BJ (cell line): ENCODE measurements at regions of chr6 and their contacts with region 1.

Region 1: DNA sequence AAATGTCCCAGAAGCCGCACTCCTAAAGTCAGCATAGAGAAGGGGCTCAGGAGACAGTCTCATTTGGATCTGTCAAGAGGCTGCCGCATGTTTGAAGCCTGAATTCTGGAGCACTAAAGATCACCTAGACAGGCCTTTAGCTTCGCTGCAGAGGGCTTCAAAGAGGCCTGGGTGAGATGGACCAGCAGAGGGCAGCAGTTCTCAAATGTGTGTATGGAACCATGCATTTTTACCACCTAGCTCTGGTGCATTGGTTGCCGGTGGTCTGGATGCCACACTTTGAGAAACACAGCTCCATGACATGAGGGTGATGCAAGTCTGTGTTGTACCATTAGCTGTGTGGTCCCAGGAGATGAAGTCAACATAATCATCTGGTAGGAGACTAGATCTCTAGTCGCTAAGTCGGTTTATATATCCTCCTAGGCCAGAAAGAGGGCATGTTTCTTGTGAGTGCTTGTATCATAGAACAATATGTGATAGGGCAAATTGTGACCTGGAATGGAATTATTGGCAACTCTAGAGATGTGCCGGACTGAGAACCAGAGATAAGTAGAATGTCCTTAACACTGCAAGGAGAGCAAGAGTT is 64.8 kb downstream of the KIAA0319 start:
- DNase-seq: no peak
- H3K4me3 ChIP-seq: no peak overlapping the region
- H3K27me3 ChIP-seq: no peaks in the 10 kb centered on the region
- CTCF ChIP-seq: peak; percentile 90

Region 2: GRCh38 chr6:24551139-24551538 is 30.0 kb before region 1 on chr6:
- CTCF ChIA-PET with region 1: interaction called, 10 read pairs
- POLR2A ChIA-PET with region 1: no interaction called
- DNase-seq: no peak
- H3K4me3 ChIP-seq: no peak overlapping the region
- H3K27me3 ChIP-seq: no peaks in the 10 kb centered on the region
- CTCF ChIP-seq: no peak

Region 3: GRCh38 chr6:24595512-24596217 is 14.5 kb after region 1 on chr6:
- CTCF ChIA-PET with region 1: interaction called, 45 read pairs
- POLR2A ChIA-PET with region 1: interaction called, 6 read pairs
- DNase-seq: no peak
- H3K4me3 ChIP-seq: no peak overlapping the region
- H3K27me3 ChIP-seq: no peaks in the 10 kb centered on the region
- CTCF ChIP-seq: no peak

Region 4: GRCh38 chr6:24689964-24690363 is 108.8 kb after region 1 on chr6:
- CTCF ChIA-PET with region 1: interaction called, 110 read pairs
- POLR2A ChIA-PET with region 1: interaction called, 4 read pairs
- DNase-seq: no peak
- H3K4me3 ChIP-seq: no peak overlapping the region
- H3K27me3 ChIP-seq: no peaks in the 10 kb centered on the region
- CTCF ChIP-seq: no peak

Region 5: DNA sequence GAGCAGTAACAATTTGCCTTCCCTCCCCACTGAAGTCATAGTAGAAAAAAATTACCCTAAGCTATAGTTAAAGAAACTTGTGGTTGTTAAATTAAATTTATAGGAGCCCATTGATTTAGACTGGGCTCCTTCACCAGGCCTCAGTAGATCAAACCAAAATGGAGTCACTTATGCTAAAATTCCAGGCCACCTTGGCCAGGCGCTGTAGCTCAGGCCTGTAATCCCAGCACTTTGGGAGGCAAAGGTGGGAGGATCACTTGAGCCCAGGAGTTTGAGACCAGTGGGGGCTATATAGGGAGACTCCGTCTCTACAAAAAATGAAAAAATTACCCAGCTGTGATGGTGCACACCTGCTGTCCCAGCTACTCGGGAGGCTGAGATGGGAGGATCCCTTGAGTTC is 178.5 kb after region 1 on chr6:
- CTCF ChIA-PET with region 1: interaction called, 61 read pairs
- POLR2A ChIA-PET with region 1: no interaction called
- DNase-seq: no peak
- H3K4me3 ChIP-seq: no peak overlapping the region
- H3K27me3 ChIP-seq: no peaks in the 10 kb centered on the region
- CTCF ChIP-seq: no peak

Region 6: GRCh38 chr6:25173951-25174474 is 592.8 kb after region 1 on chr6:
- CTCF ChIA-PET with region 1: no interaction called
- POLR2A ChIA-PET with region 1: no interaction called
- DNase-seq: peak; percentile 93
- H3K4me3 ChIP-seq: no peak overlapping the region
- H3K27me3 ChIP-seq: no peaks in the 10 kb centered on the region
- CTCF ChIP-seq: no peak